OCI-LY7 (cell line): ENCODE measurements at regions of chr6 and their contacts with region 1.

Region 1: DNA sequence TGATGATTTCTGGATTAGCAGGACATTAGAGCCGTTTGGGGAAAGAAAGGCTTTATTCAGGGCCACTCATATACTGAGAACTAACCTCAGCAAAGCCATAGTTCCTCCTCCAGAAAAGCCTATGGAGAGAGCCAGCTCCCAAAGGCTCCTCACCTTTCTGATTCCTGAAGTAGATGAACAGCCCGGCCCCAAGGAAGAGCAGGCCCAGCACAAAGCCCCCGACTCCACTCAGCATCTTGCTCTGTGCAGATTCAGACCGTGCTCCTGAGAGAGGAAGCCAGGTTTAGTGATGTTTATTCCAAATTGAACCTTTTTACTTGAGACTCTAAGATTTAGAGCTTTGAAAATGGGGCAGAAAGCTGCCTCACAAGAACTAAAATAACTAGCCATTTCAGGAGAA is 9.1 kb downstream of the HLA-DRB1 start:
- DNase-seq: no peak
- H3K4me3 ChIP-seq: no peak overlapping the region
- H3K27ac ChIP-seq: no peak overlapping the region
- H3K4me1 ChIP-seq: peaks cover 9% of the 10 kb centered on the region
- CTCF ChIP-seq: no peak

Region 2: DNA sequence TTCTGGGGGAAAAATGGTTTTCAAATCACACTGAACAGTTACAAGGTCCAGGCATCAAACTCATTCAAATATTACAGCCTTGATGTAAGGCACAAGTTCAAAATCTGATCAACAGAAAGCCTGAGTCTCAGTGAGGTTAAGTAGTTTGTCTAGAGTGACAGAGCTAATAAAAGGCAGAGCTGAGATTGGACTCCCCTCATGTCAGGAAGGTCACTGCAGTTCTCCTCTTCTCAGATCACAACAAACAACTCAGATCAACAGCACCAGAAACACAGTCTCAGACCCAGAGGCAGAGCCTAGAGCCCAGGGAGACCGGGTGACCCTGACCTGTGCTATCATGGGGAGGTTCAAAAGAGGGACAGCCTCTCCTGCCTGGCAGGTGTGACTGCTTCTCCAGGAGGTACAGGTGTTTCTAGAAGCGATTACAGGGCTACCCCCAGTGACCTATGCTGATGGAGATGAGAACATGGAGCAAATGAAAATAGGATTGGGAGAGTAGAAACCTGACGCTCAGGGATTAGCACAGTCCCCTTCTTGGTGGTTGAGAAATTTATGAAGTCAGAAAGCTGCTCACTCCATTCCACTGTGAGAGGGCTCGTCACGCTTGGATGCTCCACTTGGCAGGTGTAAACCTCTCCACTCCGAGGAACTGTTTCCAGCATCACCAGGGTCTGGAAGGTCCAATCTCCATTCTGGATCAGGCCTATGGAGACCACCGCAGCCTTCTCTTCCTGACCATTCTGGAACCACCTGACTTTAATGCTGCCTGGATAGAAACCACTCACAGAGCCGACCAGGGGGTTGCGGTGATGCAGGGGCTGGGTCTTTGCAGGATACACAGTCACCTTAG is 26.3 kb before region 1 on chr6:
- CTCF ChIA-PET with region 1: no interaction called
- POLR2A ChIA-PET with region 1: no interaction called
- intact Hi-C with region 1: loop called (anchors 1 kb)
- DNase-seq: no peak
- H3K4me3 ChIP-seq: no peak overlapping the region
- H3K27ac ChIP-seq: no peak overlapping the region
- H3K4me1 ChIP-seq: no peaks in the 10 kb centered on the region
- CTCF ChIP-seq: no peak